ENCODE measurements at regions of chr17 and their contacts with region 1.

Region 1: DNA sequence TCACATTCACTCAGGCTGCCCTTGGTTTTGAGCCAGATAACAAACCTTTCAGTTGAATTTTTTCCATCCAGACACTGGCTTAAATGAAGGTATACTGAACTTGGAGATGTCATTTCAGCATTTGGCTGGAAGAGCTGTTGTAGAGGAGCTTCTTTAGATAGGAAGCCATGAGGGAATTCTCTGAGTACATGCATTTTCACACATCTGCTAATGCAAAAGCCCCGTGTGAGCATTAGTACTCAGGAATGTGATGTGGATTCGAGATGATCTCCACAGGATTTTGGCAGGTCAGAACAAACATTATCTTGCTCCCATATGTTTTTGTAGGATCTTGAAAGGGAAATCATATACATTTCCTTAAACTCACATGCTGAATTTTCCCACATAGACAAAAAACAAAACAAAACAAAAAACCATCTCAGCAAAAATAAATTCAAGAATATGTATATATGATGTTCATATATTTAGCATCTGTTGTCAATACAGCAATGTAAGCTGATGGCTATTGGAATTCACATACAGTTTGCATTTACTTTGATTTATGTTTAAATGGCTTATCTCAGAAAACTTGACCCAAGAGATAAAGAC is 277.2 kb upstream of the TBX2 start:
- DNase-seq: no peak
- ATAC-seq: no peak
- H3K4me3 ChIP-seq: no peak overlapping the region
- H3K27ac ChIP-seq: peak overlapping the region; percentile 0; the same call in 1 of the 2 replicates
- H3K4me1 ChIP-seq: no peaks in the 10 kb centered on the region; the same call in 1 of the 2 replicates
- H3K27me3 ChIP-seq: no peaks in the 10 kb centered on the region
- CTCF ChIP-seq: no peak

Region 2: DNA sequence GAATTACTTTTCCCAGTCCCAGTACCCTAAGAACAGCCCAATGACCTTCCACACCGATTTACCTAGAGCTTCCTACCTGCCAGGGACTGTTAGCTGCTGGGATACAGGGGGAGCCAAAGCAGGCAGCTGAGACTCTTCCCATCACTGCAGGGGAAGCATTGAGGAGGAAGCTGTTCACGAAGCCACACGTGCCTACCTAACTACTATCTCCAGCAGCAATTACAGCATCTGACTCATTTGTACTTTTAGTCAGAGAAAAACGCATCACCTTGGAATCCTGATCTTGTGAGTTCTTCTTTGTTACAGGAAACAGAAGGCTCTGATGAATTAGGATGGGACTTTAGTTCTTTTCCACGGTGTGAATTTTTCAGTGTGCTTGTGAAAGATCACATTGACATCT is 1670.7 kb before region 1 on chr17:
- CTCF ChIA-PET with region 1: no interaction called
- POLR2A ChIA-PET with region 1: no interaction called
- in situ Hi-C with region 1: no loop called
- intact Hi-C with region 1: no loop called
- DNase-seq: peak; percentile 22
- ATAC-seq: no peak
- H3K4me3 ChIP-seq: no peak overlapping the region
- H3K27ac ChIP-seq: no peak overlapping the region
- H3K4me1 ChIP-seq: no peaks in the 10 kb centered on the region
- H3K27me3 ChIP-seq: no peaks in the 10 kb centered on the region
- CTCF ChIP-seq: no peak

Region 3: DNA sequence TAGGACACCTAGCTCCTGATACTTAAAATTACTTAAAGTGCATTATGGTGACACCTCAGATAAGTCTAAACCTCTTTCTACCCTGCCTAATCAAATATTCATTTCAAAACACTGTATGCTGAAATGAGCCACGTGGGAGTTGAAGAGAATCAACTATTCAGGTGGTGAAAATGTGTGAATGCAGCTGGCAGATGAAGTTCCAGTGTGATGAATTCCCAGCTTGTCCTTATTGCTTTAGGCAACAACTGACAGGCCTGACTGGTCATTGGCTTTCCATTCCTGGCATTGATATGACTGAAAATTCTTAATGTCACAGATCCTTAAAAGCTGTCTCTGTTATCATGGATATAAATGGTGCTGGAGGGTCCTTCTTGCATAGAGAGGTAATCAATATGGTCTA is 24.6 kb before region 1 on chr17:
- CTCF ChIA-PET with region 1: no interaction called
- POLR2A ChIA-PET with region 1: no interaction called
- in situ Hi-C with region 1: no loop called
- intact Hi-C with region 1: no loop called
- DNase-seq: no peak
- ATAC-seq: no peak
- H3K4me3 ChIP-seq: no peak overlapping the region
- H3K27ac ChIP-seq: no peak overlapping the region
- H3K4me1 ChIP-seq: no peaks in the 10 kb centered on the region
- H3K27me3 ChIP-seq: no peaks in the 10 kb centered on the region
- CTCF ChIP-seq: no peak

Region 4: DNA sequence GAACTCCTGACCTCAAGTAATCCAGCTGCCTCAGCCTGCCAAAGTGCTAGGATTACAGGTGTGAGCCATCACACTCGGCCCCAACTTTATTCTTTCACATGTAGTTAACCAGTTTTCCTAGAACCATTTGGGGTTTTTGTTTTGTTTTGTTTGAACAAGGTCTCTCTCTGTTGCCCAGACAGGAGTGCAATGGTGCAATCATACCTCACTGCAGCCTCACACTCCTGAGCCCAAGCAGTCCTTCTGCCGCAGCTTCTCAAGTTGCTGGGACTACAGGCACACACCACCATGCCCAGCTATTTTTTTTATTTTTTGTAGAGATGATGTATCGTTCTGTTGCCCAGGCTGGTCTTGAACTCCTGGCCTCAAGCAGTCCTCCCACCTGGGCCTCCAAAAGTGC is 149.3 kb after region 1 on chr17:
- CTCF ChIA-PET with region 1: no interaction called
- POLR2A ChIA-PET with region 1: interaction called, 11 read pairs
- in situ Hi-C with region 1: no loop called
- intact Hi-C with region 1: no loop called
- DNase-seq: no peak
- ATAC-seq: no peak
- H3K4me3 ChIP-seq: no peak overlapping the region
- H3K27ac ChIP-seq: no peak overlapping the region
- H3K4me1 ChIP-seq: no peaks in the 10 kb centered on the region
- H3K27me3 ChIP-seq: no peaks in the 10 kb centered on the region
- CTCF ChIP-seq: no peak